ENCODE measurements at regions of chr14 and their contacts with region 1.

Region 1: GRCh38 chr14:21241218-21241819 is 27.9 kb downstream of the HNRNPC start:
- DNase-seq: no peak
- ATAC-seq: no peak
- H3K4me3 ChIP-seq: no peak overlapping the region
- H3K27ac ChIP-seq: no peak overlapping the region
- H3K4me1 ChIP-seq: no peaks in the 10 kb centered on the region; the same call in 1 of the 2 replicates
- H3K27me3 ChIP-seq: no peaks in the 10 kb centered on the region
- CTCF ChIP-seq: peak in 1 of 3 experiments; percentile 37; a peak in 2 of 6 replicates
- EP300 ChIP-seq: no peak
- POLR2A ChIP-seq: no peak
- RAD21 ChIP-seq: 0 out of 2 replicates have a peak, but pooled peaks have one; percentile 21

Region 2: GRCh38 chr14:21257394-21257909 is 16.1 kb after region 1 on chr14:
- CTCF ChIA-PET with region 1: interaction called, 11 read pairs
- POLR2A ChIA-PET with region 1: interaction called, 5 read pairs
- RAD21 ChIA-PET with region 1: interaction called, 5 read pairs
- SMC1A ChIA-PET with region 1: interaction called, 9 read pairs
- in situ Hi-C with region 1: no loop called
- intact Hi-C with region 1: no loop called
- DNase-seq: no peak
- ATAC-seq: peak; percentile 33
- H3K4me3 ChIP-seq: peak overlapping the region; percentile 27; the same call in 1 of the 2 replicates
- H3K27ac ChIP-seq: no peak overlapping the region
- H3K4me1 ChIP-seq: peaks cover 6% of the 10 kb centered on the region
- H3K27me3 ChIP-seq: no peaks in the 10 kb centered on the region
- CTCF ChIP-seq: no peak
- EP300 ChIP-seq: no peak
- POLR2A ChIP-seq: peak; percentile 36; the same call in 1 of the 2 replicates
- RAD21 ChIP-seq: no peak

Region 3: DNA sequence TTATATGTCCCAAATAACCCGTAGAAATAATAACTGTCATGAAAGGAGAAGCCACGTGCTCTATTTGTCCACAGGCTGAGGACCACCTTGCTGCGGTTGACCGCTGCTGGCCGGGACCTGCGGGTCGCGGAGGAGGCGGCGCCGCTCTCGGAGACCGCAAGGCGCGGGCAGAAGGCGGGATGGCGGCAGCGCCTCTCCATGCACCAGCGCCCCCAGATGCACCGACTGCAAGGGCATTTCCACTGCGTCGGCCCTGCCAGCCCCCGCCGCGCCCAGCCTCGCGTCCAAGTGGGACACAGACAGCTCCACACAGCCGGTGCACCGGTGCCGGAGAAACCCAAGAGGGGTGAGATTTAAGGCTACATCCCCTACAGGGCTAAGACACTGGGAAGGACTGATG is 59.6 kb after region 1 on chr14:
- CTCF ChIA-PET with region 1: no interaction called
- POLR2A ChIA-PET with region 1: no interaction called
- RAD21 ChIA-PET with region 1: no interaction called
- SMC1A ChIA-PET with region 1: no interaction called
- in situ Hi-C with region 1: no loop called
- intact Hi-C with region 1: no loop called
- DNase-seq: no peak
- ATAC-seq: peak; percentile 77
- H3K4me3 ChIP-seq: peak overlapping the region; percentile 43; the same call in 1 of the 2 replicates
- H3K27ac ChIP-seq: no peak overlapping the region
- H3K4me1 ChIP-seq: peaks cover 7% of the 10 kb centered on the region
- H3K27me3 ChIP-seq: no peaks in the 10 kb centered on the region; a peak in 1 of 4 replicates
- CTCF ChIP-seq: 0 out of 6 replicates have a peak, but pooled peaks of 2 of the 3 experiments have one; percentile 1 to 8
- EP300 ChIP-seq: no peak
- POLR2A ChIP-seq: no peak
- RAD21 ChIP-seq: no peak